ENCODE measurements at regions of chr9 and their contacts with region 1.

Region 1: GRCh38 chr9:129726322-129727160 is 26.3 kb downstream of the PTGES start:
- DNase-seq: peak; percentile 74
- H3K4me3 ChIP-seq: no peak overlapping the region
- CTCF ChIP-seq: peak; percentile 98

Region 2: GRCh38 chr9:129131300-129132145 is 595.0 kb before region 1 on chr9:
- in situ Hi-C with region 1: loop called (anchors 5 kb)
- DNase-seq: no peak
- H3K4me3 ChIP-seq: no peak overlapping the region
- CTCF ChIP-seq: peak; percentile 98

Region 3: DNA sequence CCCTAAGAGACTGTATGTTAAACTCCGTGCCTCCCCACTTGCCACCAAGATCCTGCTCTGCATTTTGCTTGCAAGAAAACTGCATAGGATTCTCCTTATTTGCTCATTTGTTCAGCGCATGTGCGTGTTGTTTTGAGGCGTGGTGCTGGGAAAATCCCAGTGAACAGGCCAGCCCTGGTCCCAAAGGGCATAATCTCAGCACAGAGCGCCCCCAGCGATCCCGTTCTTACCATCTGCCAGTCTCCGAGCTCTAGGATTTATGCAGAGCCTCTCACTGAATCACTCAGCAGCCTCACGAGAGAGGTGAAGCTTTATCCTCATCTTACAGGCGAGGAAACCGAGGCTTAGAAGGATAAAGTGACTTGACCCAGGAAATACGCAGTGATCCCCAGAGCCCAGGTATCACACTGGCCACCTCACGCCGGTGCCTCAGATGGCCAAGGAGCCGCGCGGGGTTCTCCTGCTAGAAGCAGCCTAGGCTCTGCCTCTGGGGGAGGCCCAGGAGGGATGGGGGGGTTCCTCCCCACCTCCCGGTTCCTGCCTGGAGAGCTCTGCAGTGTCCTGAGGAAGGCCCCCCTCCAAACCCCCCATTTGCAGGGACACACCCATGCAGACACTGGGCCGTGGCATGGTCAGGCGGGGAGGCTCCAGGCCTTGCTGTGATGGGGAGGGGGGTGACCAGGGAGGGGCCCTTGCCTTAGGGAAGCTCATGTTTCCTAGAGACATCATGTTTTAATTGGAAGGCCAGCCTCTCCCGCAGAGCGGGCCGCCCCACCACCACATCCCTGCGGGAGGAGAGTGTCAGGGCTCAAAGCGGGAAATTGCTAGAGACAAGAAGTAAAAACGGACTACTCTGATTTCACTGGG is 49.3 kb before region 1 on chr9:
- in situ Hi-C with region 1: loop called (anchors 10 kb)
- DNase-seq: no peak
- H3K4me3 ChIP-seq: no peak overlapping the region
- CTCF ChIP-seq: no peak

Region 4: GRCh38 chr9:129776938-129777768 is 50.6 kb after region 1 on chr9:
- in situ Hi-C with region 1: loop called (anchors 5 kb)
- DNase-seq: peak; percentile 99
- H3K4me3 ChIP-seq: peak overlapping the region; percentile 5
- CTCF ChIP-seq: no peak

Measured in astrocyte of the cerebellum (primary cell).